ENCODE measurements at regions of chr11 and their contacts with region 1.

Region 1: GRCh38 chr11:43053638-43054412 is 258.0 kb upstream of the API5 start:
- DNase-seq: no peak
- H3K4me3 Mint-ChIP-seq: no peak overlapping the region
- H3K27ac Mint-ChIP-seq: no peak overlapping the region
- H3K4me1 Mint-ChIP-seq: no peaks in the 10 kb centered on the region
- H3K27me3 Mint-ChIP-seq: no peaks in the 10 kb centered on the region

Region 2: DNA sequence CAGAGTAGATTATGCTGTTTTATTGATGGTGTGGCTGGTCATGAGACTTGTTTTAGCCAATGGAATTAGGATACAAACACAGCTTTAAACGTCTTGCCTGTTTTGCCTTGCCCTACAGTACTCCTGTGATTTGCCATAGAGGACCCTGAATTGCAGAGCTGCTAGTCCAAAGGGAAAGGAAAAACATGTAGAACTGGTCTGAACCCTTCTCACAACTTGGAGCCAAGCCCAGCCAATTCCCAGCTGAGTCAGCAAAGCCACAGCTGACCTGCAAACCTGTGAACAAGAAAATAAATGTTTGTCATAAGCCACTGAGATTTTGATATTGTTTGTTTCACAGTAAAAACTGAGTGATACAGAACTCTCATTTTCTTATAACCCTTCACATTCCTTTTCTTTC is 102.6 kb before region 1 on chr11:
- CTCF ChIA-PET with region 1: no interaction called
- POLR2A ChIA-PET with region 1: no interaction called
- intact Hi-C with region 1: no loop called
- DNase-seq: no peak
- H3K4me3 Mint-ChIP-seq: no peak overlapping the region
- H3K27ac Mint-ChIP-seq: no peak overlapping the region
- H3K4me1 Mint-ChIP-seq: no peaks in the 10 kb centered on the region
- H3K27me3 Mint-ChIP-seq: no peaks in the 10 kb centered on the region

Region 3: GRCh38 chr11:43074810-43075209 is 21.0 kb after region 1 on chr11:
- CTCF ChIA-PET with region 1: no interaction called
- POLR2A ChIA-PET with region 1: no interaction called
- intact Hi-C with region 1: loop called (anchors 1 kb)
- DNase-seq: no peak
- H3K4me3 Mint-ChIP-seq: no peak overlapping the region
- H3K27ac Mint-ChIP-seq: no peak overlapping the region
- H3K4me1 Mint-ChIP-seq: no peaks in the 10 kb centered on the region
- H3K27me3 Mint-ChIP-seq: peaks cover 3% of the 10 kb centered on the region

Region 4: DNA sequence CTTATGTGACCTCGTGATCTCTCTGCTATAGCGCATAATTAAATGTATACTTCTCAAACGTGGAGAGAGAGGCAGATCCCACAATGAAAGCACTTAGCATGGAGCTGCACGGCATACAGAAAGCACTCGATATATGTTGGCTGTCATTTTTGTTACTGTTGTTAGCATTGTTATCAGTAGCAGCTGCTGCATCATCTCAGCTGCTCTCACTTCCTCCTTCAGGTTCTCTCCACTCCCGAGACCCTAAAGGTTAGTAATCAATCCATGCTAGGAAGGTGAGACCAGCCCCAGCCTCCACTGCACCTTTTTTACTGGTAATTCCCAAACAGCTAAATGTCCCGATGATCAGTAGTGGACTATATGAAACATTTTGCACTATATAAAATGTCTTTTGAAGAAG is 244.6 kb after region 1 on chr11:
- CTCF ChIA-PET with region 1: no interaction called
- POLR2A ChIA-PET with region 1: no interaction called
- intact Hi-C with region 1: no loop called
- DNase-seq: no peak
- H3K4me3 Mint-ChIP-seq: no peak overlapping the region
- H3K27ac Mint-ChIP-seq: no peak overlapping the region
- H3K4me1 Mint-ChIP-seq: no peaks in the 10 kb centered on the region
- H3K27me3 Mint-ChIP-seq: peaks cover 10% of the 10 kb centered on the region